Posterior vena cava (tissue), 2 donors: ENCODE measurements at regions of chr20 and their contacts with region 1.

Region 1: GRCh38 chr20:42721923-42722322 is 467.8 kb downstream of the PTPRT start:
- DNase-seq: no peak

Region 2: DNA sequence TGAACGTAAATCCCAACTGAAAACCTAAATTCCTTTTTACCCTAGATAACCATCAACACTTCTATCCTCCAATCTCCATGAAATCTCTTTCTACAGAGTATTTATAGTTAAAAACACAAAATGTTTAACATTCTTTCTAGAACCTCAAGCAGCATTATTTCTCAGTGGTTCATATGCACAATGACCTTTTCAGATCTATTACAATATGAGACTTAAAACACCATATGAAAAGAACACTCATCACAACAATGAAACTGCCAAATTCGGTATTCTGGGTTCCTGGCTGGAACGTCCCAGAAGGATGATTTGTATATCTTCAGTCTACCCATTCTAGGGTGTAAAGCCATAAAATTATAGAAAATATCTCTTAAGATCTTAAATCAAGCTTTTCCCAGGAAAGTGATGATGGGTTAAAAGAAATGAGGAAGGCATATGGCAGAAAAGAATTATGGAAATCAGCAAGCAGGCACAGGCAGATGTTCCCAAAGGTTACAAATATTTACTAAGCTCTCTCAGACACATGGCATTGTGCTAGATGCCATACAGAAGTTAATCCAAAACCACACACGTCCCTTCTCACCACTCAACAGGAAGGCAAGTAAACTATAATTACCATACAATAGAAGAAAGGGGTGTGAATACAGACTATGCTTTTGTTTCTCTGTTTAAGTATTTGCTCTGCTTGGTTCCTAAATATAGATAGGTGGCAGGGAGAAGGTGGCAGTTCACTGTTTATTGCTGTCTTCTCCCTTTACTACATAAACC is 1221.8 kb before region 1 on chr20:
- intact Hi-C with region 1: loop called in 1 of 2 experiments (anchors 5 kb)
- DNase-seq: no peak

Region 3: GRCh38 chr20:42340368-42340767 is 381.6 kb before region 1 on chr20:
- intact Hi-C with region 1: loop called in 1 of 2 experiments (anchors 10 kb)
- DNase-seq: no peak